A673 (cell line): ENCODE measurements at regions of chr16 and their contacts with region 1.

Region 1: GRCh38 chr16:29848420-29849297 is 14.4 kb downstream of the CDIPT start:
- DNase-seq: peak; percentile 72
- H3K4me3 ChIP-seq: no peak overlapping the region
- H3K27ac ChIP-seq: no peak overlapping the region
- H3K4me1 ChIP-seq: peaks cover 4% of the 10 kb centered on the region
- H3K27me3 ChIP-seq: no peaks in the 10 kb centered on the region
- CTCF ChIP-seq: peak; percentile 96

Region 2: DNA sequence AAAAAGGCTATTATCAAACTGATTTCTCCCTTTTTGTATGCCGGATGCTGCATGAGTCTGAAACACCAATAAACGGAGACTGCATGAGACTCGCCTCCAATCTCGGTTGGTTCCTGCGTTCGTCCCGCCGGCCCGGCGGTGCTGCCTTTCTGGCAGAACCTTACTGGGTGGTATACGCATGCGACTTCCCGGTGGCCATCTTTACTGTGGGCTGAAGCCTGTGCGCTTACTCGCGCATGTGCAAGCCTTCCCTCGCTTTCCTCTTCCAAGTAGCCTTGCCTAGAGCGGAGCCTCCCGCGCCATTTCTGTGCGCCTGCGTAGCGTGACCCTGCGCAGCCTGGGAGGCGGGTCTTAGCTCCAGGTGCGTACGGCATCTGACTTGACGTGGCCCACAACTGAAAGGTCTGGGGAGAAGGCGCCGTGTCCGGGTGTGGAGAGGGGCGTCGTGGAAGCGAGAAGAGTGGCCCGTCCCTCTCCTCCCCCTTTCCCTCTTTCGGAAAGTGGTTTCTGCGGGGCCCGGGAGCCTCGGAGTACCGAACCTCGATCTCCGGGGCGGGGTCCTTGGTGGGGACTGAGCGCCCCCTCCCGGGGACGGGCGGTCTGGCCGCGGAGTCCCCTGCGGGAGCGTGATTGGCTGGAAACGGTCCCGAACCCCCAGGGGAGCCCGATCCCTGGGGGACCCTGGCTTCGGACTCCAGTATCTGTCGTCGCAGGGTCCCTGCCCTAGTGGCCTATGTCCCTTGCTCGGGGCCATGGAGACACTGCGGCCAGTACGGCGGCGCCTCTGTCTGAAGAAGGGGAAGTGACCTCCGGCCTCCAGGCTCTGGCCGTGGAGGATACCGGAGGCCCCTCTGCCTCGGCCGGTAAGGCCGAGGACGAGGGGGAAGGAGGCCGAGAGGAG is 32.6 kb before region 1 on chr16 and contains the start of gene PAGR1:
- CTCF ChIA-PET with region 1: interaction called, 10 read pairs
- POLR2A ChIA-PET with region 1: no interaction called
- intact Hi-C with region 1: no loop called
- DNase-seq: peak; percentile 99
- H3K4me3 ChIP-seq: peak within 1 kb of the TSS; percentile 87
- H3K27ac ChIP-seq: peak within 1 kb of the TSS; percentile 92
- H3K4me1 ChIP-seq: peaks cover 48% of the 10 kb centered on the region
- H3K27me3 ChIP-seq: no peaks in the 10 kb centered on the region
- CTCF ChIP-seq: peak; percentile 93
- total RNA-seq, gene PAGR1: 47.4 and 50.0 TPM in 2 replicates

Region 3: GRCh38 chr16:29961479-29962343 is 113.1 kb after region 1 on chr16 and contains the start of gene TMEM219:
- CTCF ChIA-PET with region 1: no interaction called
- POLR2A ChIA-PET with region 1: no interaction called
- intact Hi-C with region 1: no loop called
- DNase-seq: peak; percentile 95
- H3K4me3 ChIP-seq: peak within 1 kb of the TSS; percentile 65
- H3K27ac ChIP-seq: peak within 1 kb of the TSS; percentile 90
- H3K4me1 ChIP-seq: peaks cover 13% of the 10 kb centered on the region
- H3K27me3 ChIP-seq: no peaks in the 10 kb centered on the region
- CTCF ChIP-seq: peak; percentile 30; the same call in 1 of the 2 replicates
- total RNA-seq, gene TMEM219: 48.3 and 52.7 TPM in 2 replicates